Posterior cingulate gyrus (tissue), 11 donors: ENCODE measurements at regions of chr9 and their contacts with region 1.

Region 1: DNA sequence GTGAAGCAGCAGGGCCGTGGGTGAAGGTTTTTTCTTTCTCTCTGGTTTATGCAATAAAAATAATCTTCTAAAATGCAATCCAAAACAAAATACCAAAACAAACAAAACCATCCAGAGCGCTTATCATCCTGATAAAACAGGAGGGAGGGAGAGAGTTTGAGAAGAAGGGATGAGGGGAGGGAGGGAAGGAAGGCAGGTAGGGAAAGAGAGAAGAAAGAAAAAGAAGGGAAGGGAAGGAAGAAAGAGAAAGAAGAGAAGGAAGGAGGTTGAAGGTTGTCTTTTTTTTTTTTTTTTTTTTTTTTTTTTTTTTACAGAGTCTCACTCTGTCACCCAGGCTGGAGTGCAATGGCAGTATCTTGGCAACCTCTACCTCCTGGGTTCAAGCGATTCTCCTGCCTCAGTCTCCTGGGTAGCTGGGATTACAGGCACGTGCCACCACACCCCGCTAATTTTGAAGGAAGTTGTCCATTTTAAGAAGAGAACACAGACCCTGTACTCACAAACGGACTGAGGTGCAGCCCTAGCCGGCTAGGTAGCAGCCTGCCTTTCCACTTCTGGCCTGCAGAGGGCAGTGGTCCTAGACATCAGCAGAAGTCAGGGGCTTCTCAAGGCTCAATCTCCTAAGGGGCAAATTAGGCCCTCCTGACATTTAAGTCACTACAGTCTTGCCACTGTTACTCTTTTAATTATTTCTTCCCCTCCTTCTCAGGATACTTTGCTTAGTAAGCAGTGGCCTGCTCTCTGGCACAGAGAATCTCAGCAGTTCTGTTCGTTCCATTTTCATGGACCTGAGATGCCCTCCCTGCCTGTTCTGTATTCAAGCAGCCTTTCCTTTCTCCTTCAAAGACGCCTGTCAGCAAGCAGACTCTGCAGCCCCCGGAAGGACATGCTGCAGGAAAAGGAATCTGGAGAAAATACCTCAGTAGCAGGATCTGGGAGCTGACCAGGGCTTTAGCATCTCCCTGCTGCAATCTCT is 76.4 kb downstream of the EPB41L4B start:
- DNase-seq: peak; percentile 49 to 95 (median 76)

Region 2: GRCh38 chr9:108727580-108728111 is 516.8 kb before region 1 on chr9:
- intact Hi-C with region 1: no loop called
- DNase-seq: peak; percentile 40 to 92 (median 60)

Region 3: GRCh38 chr9:109119439-109120203 is 124.8 kb before region 1 on chr9 and contains the start of gene TMEM245:
- intact Hi-C with region 1: no loop called
- DNase-seq: peak; percentile 92 to 100 (median 96)

Region 4: GRCh38 chr9:109206670-109207069 is 37.8 kb before region 1 on chr9:
- intact Hi-C with region 1: no loop called
- DNase-seq: peak in 1 of 10 donors; percentile 6

Region 5: DNA sequence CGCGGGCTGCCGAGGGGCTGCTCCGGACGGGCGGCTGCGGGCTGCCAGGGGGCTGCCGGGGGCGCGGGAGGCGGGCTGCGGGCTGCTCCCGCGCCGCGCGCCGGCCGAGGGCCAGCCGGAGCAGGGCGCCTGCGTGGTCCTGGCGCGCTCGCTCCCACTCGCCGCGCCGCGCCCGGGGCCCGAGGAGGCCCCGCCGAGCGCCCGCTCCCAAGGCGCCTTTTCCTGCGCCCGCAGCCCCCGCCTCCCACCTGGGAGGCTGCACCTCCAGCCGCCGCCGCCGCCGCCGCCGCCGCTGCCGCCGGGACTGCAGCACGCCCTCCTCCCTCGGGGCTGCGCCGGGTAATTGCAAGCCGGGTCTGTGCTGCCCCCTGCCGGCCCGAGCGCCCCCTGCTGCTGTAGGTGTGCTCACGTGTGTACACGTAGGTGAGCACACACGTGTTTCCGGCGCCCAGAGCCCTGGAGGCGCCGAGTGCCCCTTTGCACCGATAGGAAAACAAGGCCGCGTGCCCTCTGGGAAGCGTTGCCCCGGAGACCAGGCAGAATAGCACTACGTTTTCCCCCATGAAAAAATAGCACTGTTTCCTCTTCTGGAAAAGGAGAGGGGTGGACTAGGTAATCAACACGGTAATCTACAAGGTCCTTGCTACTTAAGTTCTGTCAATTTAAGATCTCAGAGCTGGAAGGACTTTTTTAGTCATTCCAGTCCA is 76.5 kb after region 1 on chr9 and contains the start of gene EPB41L4B:
- intact Hi-C with region 1: loop called (anchors 2 kb)
- DNase-seq: peak; percentile 73 to 98 (median 87)

Region 6: DNA sequence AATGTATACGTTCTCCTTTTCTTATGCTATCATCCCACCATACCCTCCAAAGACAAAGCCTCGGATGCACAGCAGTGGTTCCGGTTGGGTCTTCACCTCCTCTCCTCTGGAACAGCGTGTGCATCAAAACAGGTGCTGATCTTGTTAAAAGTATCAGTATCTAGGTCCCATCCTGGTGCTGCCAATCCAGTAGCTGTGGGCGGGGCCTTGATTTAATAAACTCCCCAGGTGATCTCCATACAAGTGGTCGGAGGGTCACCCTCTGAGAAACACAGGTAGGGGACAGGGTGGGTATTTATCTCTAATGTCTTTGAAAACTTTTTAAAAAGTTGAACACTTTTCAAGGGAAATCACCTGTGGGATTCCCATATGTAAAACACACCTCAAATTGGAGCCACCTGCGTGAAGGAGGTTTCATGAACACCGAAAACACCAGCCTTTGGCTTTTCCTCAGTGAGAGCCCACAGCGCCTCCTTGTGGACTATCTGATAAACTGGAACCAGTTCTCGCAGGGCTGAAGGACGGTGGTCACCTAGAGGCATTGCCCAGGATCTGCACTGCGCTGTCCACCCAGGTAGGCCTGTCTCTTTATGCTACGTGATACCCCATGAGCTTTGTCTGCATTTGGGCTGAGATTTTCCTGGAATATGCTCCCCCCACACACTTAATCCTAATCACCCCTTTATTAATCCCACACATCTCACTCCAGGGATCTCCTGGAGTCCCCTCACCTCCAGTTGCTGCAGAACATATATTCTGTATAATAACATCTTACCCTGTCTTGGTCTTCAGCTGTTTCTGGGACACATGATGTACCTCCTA is 156.9 kb after region 1 on chr9:
- intact Hi-C with region 1: loop called (anchors 10 kb)
- DNase-seq: peak in 7 of 10 donors; percentile 19 to 89 (median 47)

Region 7: GRCh38 chr9:109469646-109470358 is 225.4 kb after region 1 on chr9:
- intact Hi-C with region 1: loop called (anchors 5 kb)
- DNase-seq: peak; percentile 67 to 96 (median 82)

Region 8: DNA sequence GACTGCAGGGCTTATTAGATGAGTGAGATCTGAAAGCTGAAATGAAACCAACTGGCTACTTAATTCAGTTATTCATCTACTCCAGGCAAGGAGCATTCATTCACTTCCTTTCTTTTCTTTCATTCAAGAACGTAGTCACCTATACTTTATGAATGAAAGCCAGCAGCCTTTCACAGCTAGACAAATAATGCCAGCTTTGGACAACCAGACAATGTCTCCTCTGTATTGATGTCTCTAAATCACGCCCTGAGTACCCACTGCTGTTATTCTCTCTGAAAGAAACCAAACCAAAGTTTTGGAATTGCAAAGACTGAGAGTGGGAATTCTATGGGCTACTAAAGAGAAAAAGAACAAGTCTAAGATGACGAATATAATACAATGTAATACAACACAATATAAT is 374.9 kb after region 1 on chr9:
- intact Hi-C with region 1: no loop called
- DNase-seq: no peak